ENCODE measurements at regions of chr15 and their contacts with region 1.

Region 1: DNA sequence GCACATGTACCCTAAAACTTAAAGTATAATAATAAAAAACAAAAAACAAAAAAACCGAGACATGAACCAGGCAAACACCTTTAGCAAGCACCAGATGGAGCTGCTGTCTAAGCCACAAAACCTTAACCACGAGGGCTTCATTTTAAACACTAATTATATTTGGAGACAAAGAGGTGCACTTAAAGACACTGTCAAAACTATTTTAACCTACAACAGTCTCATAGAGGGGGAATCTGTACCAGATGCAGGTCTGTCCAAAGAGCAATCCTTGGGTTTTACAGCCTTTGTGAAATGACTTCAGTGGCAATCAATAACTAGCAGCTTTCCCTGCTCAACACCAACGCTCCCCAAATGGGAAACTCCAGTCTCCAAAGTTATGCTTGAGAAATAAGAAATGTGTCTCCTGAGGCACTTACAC is 115.7 kb upstream of the TSPAN3 start:
- DNase-seq: no peak
- ATAC-seq: peak in 2 of 4 donors; percentile 37 to 42
- H3K4me3 ChIP-seq: no peak overlapping the region
- H3K27ac ChIP-seq: peak overlapping the region; percentile 62
- H3K4me1 ChIP-seq: no peaks in the 10 kb centered on the region
- H3K27me3 ChIP-seq: no peaks in the 10 kb centered on the region
- CTCF ChIP-seq: peak; percentile 50

Region 2: GRCh38 chr15:77107068-77107467 is 79.5 kb before region 1 on chr15:
- intact Hi-C with region 1: no loop called
- DNase-seq: peak; percentile 25 to 70
- ATAC-seq: peak; percentile 33 to 51 (median 43)
- H3K4me3 ChIP-seq: no peak overlapping the region
- H3K27ac ChIP-seq: peak overlapping the region; percentile 56
- H3K4me1 ChIP-seq: peaks cover 22% of the 10 kb centered on the region
- H3K27me3 ChIP-seq: no peaks in the 10 kb centered on the region
- CTCF ChIP-seq: no peak

Region 3: GRCh38 chr15:77507911-77508310 is 321.3 kb after region 1 on chr15:
- intact Hi-C with region 1: loop called in 1 of 2 experiments (anchors 5 kb)
- DNase-seq: peak in 1 of 2 donors; percentile 60
- ATAC-seq: peak; percentile 75 to 89 (median 84)
- H3K4me3 ChIP-seq: peak overlapping the region; percentile 41
- H3K27ac ChIP-seq: peak overlapping the region; percentile 80
- H3K4me1 ChIP-seq: peaks cover 68% of the 10 kb centered on the region
- H3K27me3 ChIP-seq: no peaks in the 10 kb centered on the region
- CTCF ChIP-seq: no peak

Measured in psoas muscle (tissue), 8 donors.